Activated CD8-positive, alpha-beta T cell treated with anti-CD3 and anti-CD28 coated beads for 36 hours (primary cell): ENCODE measurements at regions of chr5 and their contacts with region 1.

Region 1: DNA sequence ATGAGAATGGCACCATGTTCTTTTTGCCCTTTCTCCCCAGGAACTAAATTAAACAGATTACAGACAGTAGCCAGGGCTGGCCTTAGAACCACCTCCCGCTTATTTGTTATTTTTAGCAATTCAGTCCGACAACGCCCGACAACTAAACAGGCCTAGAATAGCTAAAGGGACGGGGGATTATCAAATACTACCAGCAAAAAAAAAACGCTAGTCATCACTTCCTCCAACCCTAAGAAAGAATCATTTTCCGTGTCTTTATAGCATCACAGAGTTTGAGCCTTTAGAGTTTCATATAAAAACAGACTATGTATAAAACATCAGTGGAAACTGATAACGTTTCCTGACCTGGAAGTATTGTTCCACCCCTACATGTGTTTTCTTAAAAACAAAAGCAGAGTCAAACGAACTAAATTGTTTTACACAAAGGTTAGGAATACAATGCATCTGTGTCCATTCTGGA is 35.3 kb downstream of the PFDN1 start:
- DNase-seq: no peak
- ATAC-seq: peak; percentile 18
- H3K4me3 Mint-ChIP-seq: no peak overlapping the region
- H3K27ac Mint-ChIP-seq: peak overlapping the region; percentile 39
- H3K4me1 Mint-ChIP-seq: peaks cover 36% of the 10 kb centered on the region
- H3K27me3 Mint-ChIP-seq: no peaks in the 10 kb centered on the region
- CTCF ChIP-seq: no peak

Region 2: GRCh38 chr5:140244525-140245025 is 23.0 kb before region 1 on chr5:
- CTCF ChIA-PET with region 1: interaction called, 144 read pairs
- POLR2A ChIA-PET with region 1: no interaction called
- intact Hi-C with region 1: no loop called
- DNase-seq: peak; percentile 91
- ATAC-seq: peak; percentile 77
- H3K4me3 Mint-ChIP-seq: no peak overlapping the region
- H3K27ac Mint-ChIP-seq: no peak overlapping the region
- H3K4me1 Mint-ChIP-seq: peaks cover 10% of the 10 kb centered on the region
- H3K27me3 Mint-ChIP-seq: no peaks in the 10 kb centered on the region
- CTCF ChIP-seq: peak; percentile 91

Region 3: GRCh38 chr5:140284013-140284412 is 16.4 kb after region 1 on chr5:
- CTCF ChIA-PET with region 1: no interaction called
- POLR2A ChIA-PET with region 1: no interaction called
- intact Hi-C with region 1: no loop called
- DNase-seq: no peak
- ATAC-seq: no peak
- H3K4me3 Mint-ChIP-seq: no peak overlapping the region
- H3K27ac Mint-ChIP-seq: no peak overlapping the region
- H3K4me1 Mint-ChIP-seq: peaks cover 25% of the 10 kb centered on the region
- H3K27me3 Mint-ChIP-seq: no peaks in the 10 kb centered on the region
- CTCF ChIP-seq: no peak